B cell (primary cell): ENCODE measurements at regions of chr20 and their contacts with region 1.

Region 1: DNA sequence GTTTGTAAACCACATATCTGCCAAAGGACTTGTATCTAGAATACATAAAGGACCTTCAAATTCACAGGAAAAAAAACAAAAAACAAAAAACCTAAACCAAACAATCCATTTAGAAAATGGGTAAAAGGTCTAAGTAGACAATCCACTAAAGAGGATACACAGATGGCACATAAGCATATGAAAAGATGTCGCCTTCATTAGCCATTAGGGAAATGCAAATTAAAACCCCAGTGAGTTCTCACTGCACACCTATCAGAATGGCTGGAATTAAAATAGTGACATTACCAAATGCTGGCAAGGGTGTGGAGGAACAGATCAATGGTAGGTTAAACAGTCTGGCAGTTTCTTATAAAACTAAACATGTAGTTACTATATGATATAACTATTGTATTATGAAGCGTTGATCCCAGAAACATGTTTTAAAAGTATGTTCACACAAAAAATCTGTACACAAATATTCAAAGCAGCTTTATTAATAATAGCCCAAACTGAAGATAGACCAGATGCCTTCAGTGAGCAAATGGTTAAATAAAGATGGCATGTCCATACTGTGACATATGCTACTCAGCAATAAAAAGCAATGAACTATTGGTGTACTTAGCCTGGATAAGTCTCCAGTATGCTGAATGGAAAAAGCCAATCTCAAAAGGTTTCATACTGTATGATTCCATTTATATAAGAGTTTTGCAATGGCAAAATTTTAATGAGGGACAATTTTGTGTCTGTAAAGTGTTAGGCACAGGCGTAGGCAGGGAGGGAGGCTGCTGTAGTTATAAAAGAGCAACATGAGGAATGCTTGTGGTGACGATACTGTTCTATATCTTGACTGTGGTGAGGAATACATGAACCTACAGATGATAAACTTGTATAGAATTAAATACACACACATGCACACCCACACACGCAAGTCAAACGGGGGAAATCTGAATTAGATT is 43.9 kb downstream of the PLCB1 start:
- DNase-seq: no peak
- ATAC-seq: no peak
- H3K4me3 ChIP-seq: no peak overlapping the region
- H3K4me3 Mint-ChIP-seq: no peak overlapping the region
- H3K27ac ChIP-seq: no peak overlapping the region
- H3K27ac Mint-ChIP-seq: no peak overlapping the region
- H3K4me1 ChIP-seq: no peaks in the 10 kb centered on the region
- H3K4me1 Mint-ChIP-seq: no peaks in the 10 kb centered on the region
- H3K27me3 ChIP-seq: no peaks in the 10 kb centered on the region
- H3K27me3 Mint-ChIP-seq: peaks cover 6% of the 10 kb centered on the region
- CTCF ChIP-seq: no peak

Region 2: GRCh38 chr20:8144282-8145245 is 31.4 kb before region 1 on chr20:
- CTCF ChIA-PET with region 1: no interaction called
- POLR2A ChIA-PET with region 1: no interaction called
- intact Hi-C with region 1: no loop called
- DNase-seq: no peak
- ATAC-seq: no peak
- H3K4me3 ChIP-seq: no peak overlapping the region
- H3K4me3 Mint-ChIP-seq: no peak overlapping the region
- H3K27ac ChIP-seq: no peak overlapping the region
- H3K27ac Mint-ChIP-seq: no peak overlapping the region
- H3K4me1 ChIP-seq: no peaks in the 10 kb centered on the region
- H3K4me1 Mint-ChIP-seq: no peaks in the 10 kb centered on the region
- H3K27me3 ChIP-seq: no peaks in the 10 kb centered on the region
- H3K27me3 Mint-ChIP-seq: peaks cover 3% of the 10 kb centered on the region
- CTCF ChIP-seq: no peak

Region 3: DNA sequence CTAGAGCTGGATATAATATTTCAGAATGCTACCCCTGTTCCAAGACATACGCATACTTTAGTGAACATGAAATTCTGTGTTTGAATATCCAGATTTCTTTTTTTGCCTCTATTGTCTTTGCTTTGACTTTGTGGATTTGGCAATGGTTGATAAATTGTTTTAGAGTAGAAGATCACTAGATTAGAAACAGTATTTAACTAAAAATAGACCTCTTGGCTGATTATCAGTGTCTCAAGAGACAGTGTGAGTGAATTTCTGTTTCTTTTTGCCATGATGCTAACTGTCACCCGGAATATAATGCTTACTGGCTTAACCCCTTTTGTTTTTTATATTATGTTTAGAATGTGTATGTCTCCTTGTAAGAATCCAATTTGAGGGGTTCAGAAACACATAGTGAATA is 58.6 kb after region 1 on chr20:
- CTCF ChIA-PET with region 1: no interaction called
- POLR2A ChIA-PET with region 1: no interaction called
- intact Hi-C with region 1: loop called (anchors 10 kb)
- DNase-seq: no peak
- ATAC-seq: no peak
- H3K4me3 ChIP-seq: no peak overlapping the region
- H3K4me3 Mint-ChIP-seq: no peak overlapping the region
- H3K27ac ChIP-seq: no peak overlapping the region
- H3K27ac Mint-ChIP-seq: no peak overlapping the region
- H3K4me1 ChIP-seq: no peaks in the 10 kb centered on the region
- H3K4me1 Mint-ChIP-seq: peaks cover 2% of the 10 kb centered on the region
- H3K27me3 ChIP-seq: no peaks in the 10 kb centered on the region
- H3K27me3 Mint-ChIP-seq: no peaks in the 10 kb centered on the region
- CTCF ChIP-seq: no peak